ENCODE measurements at regions of chr17 and their contacts with region 1.

Region 1: GRCh38 chr17:45021607-45022287 is 29.7 kb downstream of the DCAKD start:
- DNase-seq: no peak
- H3K4me3 ChIP-seq: peak overlapping the region; percentile 53
- CTCF ChIP-seq: peak; percentile 64

Region 2: DNA sequence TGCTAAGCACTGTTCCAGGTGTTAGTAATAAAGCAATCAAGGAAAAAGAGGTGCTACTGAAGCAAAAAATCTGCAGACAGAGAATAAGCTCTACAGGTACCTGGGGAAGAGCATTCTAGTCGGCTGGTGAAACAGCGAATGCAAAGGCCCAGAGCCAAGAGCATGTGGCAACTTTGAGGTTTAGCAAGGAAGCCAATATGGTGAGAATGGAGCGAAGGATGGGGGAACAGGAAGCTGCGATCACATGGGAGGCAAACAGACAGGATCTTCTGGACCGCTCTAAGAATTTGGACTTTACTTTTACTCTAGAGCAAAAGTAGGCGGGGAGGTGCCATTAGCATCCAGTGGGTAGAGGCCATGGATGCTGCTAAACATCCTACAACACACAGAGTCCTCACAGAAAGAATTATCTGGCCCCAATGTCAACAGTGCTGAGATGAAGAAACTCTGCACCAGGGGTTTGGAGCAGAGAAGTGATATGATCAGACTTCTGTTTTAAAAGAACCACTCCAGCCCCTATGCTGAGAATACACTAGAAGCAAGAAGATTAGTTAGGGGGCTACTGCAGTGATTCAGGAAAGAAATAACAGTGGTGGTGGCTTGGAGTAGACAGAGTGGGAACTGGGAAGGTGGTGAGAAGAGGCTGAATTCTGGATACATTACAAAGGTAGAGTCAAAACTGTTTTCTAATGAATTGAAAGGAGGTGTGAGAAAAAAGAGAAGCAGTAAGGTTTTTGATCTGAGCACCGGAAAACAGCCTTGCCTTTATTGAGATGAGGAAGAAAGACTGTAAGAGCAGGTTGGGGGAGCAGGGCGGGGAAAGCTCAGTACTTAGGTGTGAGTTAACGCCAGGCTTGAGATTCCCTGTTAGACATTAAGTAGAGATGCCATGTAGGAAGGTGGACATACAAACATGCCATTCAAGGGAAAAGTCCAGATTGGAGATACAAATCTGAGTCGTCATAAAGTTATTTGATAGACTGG is 133.5 kb before region 1 on chr17:
- CTCF ChIA-PET with region 1: interaction called, 16 read pairs
- POLR2A ChIA-PET with region 1: no interaction called
- DNase-seq: no peak
- H3K4me3 ChIP-seq: no peak overlapping the region
- CTCF ChIP-seq: no peak

Region 3: GRCh38 chr17:44932496-44933097 is 89.2 kb before region 1 on chr17:
- CTCF ChIA-PET with region 1: interaction called, 673 read pairs
- POLR2A ChIA-PET with region 1: no interaction called
- DNase-seq: no peak
- H3K4me3 ChIP-seq: no peak overlapping the region
- CTCF ChIP-seq: no peak

Region 4: GRCh38 chr17:44997733-44998520 is 23.8 kb before region 1 on chr17:
- CTCF ChIA-PET with region 1: interaction called, 38 read pairs
- POLR2A ChIA-PET with region 1: interaction called, 3 read pairs
- DNase-seq: no peak
- H3K4me3 ChIP-seq: no peak overlapping the region
- CTCF ChIP-seq: no peak

Region 5: DNA sequence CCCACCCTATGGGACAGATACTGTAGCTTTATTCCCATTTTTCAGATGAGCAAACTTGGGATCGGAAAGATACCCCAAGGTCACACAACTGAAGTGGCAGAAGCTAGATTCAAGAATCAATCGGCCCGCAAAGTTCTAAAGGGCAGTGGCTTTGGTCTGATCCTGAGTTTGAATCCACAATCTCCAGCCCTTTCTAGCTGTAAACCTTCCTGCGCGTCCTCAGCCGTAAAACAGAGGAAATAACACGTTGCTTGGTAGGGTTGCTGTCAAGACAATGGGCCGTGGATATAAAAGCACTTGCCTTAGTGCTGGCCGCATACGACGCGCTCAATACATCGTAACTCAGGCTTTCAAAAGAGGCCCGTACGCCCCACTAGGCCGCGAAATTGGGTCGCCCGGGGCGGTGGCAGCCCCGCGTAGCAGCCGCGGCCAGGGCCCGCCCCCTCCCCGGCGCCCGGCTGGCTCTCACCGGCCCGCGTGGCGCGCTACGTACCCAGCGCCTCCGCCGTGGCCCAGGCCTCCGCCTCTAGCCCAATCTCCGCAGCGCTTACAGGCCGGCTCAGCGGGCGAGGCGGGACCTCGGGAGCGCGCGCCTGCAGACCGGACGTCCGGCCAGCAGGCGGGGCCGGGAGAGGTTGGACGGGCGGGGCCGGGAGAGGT is 29.4 kb after region 1 on chr17 and contains the start of gene DCAKD:
- CTCF ChIA-PET with region 1: interaction called, 74 read pairs
- POLR2A ChIA-PET with region 1: no interaction called
- DNase-seq: peak; percentile 65
- H3K4me3 ChIP-seq: peak within 1 kb of the TSS; percentile 66
- CTCF ChIP-seq: peak; percentile 11

Measured in AG04449 (cell line).